A549 (cell line): ENCODE measurements at regions of chr1 and their contacts with region 1.

Region 1: GRCh38 chr1:221435504-221435904 is 306.4 kb downstream of the DUSP10 start:
- DNase-seq: peak; percentile 36 to 66
- ATAC-seq: peak; percentile 35 to 59; a peak in 3 of 6 replicates
- H3K4me3 ChIP-seq: no peak overlapping the region
- H3K27ac ChIP-seq: no peak overlapping the region
- H3K4me1 ChIP-seq: peaks cover 21% of the 10 kb centered on the region
- CTCF ChIP-seq: peak; percentile 85
- EP300 ChIP-seq: no peak
- POLR2A ChIP-seq: no peak
- RAD21 ChIP-seq: peak; percentile 84 to 86

Region 2: DNA sequence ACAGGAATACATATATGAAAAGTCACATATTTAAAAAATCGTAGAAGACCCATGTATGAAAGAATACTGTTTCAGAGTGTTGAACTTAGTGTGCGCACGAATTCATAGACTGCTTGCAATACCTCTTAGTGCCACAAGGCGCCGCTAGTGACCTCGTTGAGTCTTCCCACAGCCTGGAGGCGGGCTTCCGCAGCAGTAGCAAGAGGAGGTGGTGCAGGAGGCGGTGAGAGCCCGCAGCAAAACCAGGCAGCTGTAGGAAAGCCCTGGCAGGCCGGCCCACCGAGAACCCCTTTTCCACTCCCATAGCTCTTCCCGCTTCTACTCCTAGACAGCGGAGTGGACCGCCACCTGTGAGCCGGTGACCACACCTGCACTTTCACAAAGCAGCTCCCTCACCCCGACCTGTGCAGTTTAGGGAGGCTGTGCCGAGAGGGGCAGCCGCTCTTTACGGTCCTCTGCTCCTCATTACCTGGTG is 625.3 kb before region 1 on chr1:
- CTCF ChIA-PET with region 1: interaction called, 16 read pairs
- POLR2A ChIA-PET with region 1: no interaction called
- DNase-seq: peak; percentile 57 to 77
- ATAC-seq: peak; percentile 83 to 95
- H3K4me3 ChIP-seq: no peak overlapping the region
- H3K27ac ChIP-seq: no peak overlapping the region
- H3K4me1 ChIP-seq: no peaks in the 10 kb centered on the region
- CTCF ChIP-seq: peak; percentile 79
- EP300 ChIP-seq: no peak
- POLR2A ChIP-seq: no peak
- RAD21 ChIP-seq: peak; percentile 83 to 84

Region 3: DNA sequence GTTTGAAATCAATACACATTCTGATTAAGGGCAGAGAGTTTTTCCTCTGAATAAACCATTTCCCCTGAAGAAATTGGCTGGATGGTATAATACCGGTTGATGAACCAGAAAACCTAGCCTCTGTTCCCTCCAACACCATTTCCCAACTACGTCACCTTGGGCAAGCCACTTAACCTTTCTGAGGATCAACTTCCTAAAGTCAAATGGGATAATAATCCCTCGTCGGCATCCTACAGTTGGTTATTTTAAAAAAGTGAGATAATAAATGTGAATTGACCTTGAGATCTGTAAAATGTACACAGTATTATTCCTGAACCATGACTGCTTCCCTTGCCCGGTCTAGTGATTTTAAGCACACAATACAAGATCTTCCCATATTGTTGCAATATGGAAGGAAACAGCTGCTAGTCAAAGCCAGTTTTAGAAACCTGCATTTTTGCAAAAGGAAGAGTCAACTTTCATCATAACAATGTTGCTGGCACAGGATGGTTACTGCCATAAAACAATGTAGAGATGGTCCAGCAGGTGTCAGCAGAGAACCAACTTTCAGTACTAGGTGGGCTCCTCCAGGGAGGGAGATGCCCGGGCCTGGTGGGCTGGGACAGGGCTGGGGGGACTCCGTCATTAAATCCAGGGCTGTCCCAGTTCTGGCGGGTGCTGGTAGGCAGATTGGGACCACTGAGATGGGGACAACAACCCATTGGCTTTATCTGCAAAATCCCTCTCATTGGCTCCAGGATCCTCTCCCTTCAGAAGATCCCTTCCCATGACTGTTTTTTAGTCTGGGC is 561.4 kb before region 1 on chr1:
- CTCF ChIA-PET with region 1: interaction called, 18 read pairs
- POLR2A ChIA-PET with region 1: no interaction called
- DNase-seq: peak; percentile 34 to 53
- ATAC-seq: peak; percentile 64 to 65; a peak in 4 of 6 replicates
- H3K4me3 ChIP-seq: no peak overlapping the region
- H3K27ac ChIP-seq: peak overlapping the region in 1 of 2 experiments; percentile 26; a peak in 2 of 6 replicates
- H3K4me1 ChIP-seq: peaks cover 26% of the 10 kb centered on the region; the same call in 2 of the 3 replicates
- CTCF ChIP-seq: peak; percentile 89
- EP300 ChIP-seq: no peak
- POLR2A ChIP-seq: no peak
- RAD21 ChIP-seq: peak; percentile 85 to 96

Region 4: DNA sequence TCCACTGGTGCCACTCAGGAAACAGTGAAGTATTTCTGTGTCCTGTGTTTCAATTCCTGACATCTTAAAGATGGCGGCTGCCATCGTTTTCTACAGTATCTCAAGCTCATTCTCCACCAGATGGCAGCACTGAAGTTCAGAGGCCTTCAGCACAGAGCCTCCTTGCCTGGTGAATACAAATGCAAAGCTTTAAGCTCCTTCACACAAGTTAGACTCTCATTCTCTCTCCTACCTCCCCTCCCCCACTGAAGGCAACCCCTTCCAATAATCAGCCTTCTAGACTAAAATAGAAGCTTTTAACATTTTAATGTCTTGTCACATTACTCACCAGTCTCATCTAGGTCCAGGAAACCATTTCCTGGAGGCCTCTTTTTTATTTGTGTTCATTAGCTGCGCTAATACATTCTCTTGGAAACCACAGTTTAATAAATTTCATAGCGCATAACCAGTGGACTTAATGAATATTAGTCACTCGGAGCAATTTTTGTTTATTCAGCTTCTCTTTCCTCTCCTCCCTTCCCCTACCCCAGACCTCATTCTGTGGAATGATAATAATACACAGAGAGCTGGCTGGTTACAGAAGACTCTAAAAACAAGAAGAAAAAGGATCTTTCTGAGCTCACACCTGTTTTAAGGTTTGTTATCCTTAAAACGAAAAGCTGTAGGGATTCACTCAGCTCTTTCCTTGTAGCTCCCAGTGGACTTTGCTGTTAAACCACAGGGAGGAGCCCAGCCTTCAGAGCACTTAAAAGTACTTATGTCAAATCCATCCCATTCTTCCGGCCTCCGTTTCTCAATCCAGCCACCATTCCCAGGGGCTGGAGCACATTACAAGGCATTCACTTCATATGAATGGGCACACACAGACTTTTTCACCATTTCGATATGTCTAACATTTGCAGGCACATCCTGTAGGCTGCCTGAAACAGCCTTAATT is 171.4 kb before region 1 on chr1:
- CTCF ChIA-PET with region 1: interaction called, 13 read pairs
- POLR2A ChIA-PET with region 1: interaction called, 3 read pairs
- DNase-seq: peak; percentile 43 to 79
- ATAC-seq: peak; percentile 43 to 94; a peak in 4 of 6 replicates
- H3K4me3 ChIP-seq: no peak overlapping the region
- H3K27ac ChIP-seq: no peak overlapping the region
- H3K4me1 ChIP-seq: no peaks in the 10 kb centered on the region
- CTCF ChIP-seq: peak; percentile 44
- EP300 ChIP-seq: no peak
- POLR2A ChIP-seq: no peak
- RAD21 ChIP-seq: peak; percentile 46 to 58; a peak in 3 of 5 replicates

Region 5: GRCh38 chr1:221418346-221418745 is 17.2 kb before region 1 on chr1:
- CTCF ChIA-PET with region 1: interaction called, 12 read pairs
- POLR2A ChIA-PET with region 1: no interaction called
- DNase-seq: no peak
- ATAC-seq: no peak
- H3K4me3 ChIP-seq: no peak overlapping the region
- H3K27ac ChIP-seq: no peak overlapping the region
- H3K4me1 ChIP-seq: no peaks in the 10 kb centered on the region
- CTCF ChIP-seq: no peak
- EP300 ChIP-seq: no peak
- POLR2A ChIP-seq: no peak
- RAD21 ChIP-seq: no peak